ENCODE measurements at regions of chr7 and their contacts with region 1.

Region 1: DNA sequence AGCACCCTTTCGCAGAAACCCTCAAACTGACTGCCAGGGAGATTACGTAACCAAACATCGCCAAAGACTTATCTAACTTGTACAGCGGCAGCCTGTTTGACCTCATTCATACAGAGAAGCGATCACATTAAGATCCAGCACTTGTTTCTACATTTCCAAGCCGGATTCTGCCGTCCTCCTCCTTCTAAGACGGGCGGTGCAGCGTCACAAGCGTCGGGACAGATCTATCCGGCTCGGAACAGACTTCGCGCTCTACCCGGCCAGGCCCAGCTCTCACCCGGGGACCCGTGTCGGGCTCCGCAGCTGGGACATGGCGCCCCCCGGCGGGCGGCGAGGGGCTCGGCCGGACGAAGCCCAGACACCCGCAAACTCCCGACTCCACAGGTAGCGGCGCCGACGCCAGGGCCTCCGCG is 373 bp downstream of the H2AZ2 start:
- DNase-seq: peak; percentile 59 to 93 (median 86)

Region 2: GRCh38 chr7:44581879-44582603 is 265.5 kb before region 1 on chr7 and contains the start of gene TMED4:
- intact Hi-C with region 1: loop called (anchors 5 kb)
- DNase-seq: peak; percentile 96 to 100 (median 99)

Region 3: GRCh38 chr7:44748045-44748947 is 99.2 kb before region 1 on chr7 and contains the start of gene ZMIZ2:
- intact Hi-C with region 1: loop called (anchors 10 kb)
- DNase-seq: peak; percentile 81 to 99 (median 97)

Region 4: DNA sequence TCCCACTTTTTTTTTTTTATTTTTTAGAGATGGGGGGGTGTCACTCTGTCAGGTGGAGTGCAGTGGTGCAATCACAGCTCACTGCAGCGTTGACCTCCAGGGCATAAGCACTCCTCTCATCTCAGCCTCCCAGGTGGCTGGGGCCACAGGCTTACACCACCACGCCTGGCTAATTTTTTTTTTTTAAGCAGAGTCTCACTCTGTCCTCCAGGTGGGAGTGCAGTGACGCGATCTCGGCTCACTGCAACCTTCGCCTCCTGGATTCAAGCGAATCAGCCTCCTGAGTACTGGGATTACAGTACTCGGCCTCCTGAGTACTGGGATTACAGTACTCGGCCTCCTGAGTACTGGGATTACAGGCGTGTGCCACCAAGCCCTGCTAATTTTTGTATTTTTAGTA is 74.7 kb before region 1 on chr7:
- intact Hi-C with region 1: no loop called
- DNase-seq: no peak

Region 5: DNA sequence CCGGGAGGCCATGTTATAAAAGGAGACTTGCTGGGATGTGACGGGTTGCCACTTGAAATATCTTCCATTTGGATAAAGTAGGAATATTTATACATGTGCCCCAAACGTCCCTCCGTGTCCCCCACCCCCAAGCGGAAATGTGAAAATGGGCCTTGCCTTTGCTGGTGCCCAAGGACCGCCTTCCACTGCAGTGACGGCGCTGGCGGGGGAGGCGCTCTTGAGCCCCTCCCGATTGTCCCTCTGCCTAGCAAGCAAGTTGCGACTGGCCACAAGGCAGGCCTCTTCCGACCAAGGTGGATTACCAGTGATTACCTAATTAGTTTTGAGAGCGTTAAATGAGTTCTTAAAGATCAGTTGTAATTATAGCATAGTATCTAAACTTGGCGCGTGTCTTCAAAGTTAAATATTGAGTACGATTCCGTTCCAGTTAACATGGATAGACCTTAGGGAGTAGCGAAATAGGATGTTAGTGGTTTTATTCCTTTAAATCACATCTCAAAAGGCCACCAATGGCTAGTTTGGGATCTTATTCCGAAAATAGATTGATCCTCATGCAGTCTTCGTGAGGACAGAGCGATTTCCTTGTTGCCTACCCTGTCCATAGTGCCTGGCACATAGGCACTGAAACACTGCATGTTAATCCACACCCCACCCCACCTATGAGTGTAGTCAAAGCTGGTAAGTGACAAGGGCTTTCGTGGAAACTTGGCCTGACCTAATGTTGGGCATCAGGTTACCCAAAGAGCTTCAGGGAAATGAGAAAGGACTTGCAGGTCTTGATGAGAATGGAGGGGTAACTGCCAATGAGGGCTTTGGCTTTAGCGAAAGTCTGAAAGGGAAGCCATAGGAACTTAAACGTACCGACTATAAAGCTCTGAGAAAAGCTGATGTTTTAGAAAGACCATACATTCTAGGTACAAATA is 49.9 kb before region 1 on chr7:
- intact Hi-C with region 1: loop called (anchors 2 kb)
- DNase-seq: peak; percentile 73 to 95 (median 90)

Region 6: GRCh38 chr7:44885394-44886317 is 38.1 kb after region 1 on chr7 and contains the start of gene PURB:
- intact Hi-C with region 1: loop called (anchors 5 kb)
- DNase-seq: peak; percentile 84 to 99 (median 95)

Measured in head of caudate nucleus (tissue), 42 donors.